AG04450 (cell line): ENCODE measurements at regions of chr3 and their contacts with region 1.

Region 1: DNA sequence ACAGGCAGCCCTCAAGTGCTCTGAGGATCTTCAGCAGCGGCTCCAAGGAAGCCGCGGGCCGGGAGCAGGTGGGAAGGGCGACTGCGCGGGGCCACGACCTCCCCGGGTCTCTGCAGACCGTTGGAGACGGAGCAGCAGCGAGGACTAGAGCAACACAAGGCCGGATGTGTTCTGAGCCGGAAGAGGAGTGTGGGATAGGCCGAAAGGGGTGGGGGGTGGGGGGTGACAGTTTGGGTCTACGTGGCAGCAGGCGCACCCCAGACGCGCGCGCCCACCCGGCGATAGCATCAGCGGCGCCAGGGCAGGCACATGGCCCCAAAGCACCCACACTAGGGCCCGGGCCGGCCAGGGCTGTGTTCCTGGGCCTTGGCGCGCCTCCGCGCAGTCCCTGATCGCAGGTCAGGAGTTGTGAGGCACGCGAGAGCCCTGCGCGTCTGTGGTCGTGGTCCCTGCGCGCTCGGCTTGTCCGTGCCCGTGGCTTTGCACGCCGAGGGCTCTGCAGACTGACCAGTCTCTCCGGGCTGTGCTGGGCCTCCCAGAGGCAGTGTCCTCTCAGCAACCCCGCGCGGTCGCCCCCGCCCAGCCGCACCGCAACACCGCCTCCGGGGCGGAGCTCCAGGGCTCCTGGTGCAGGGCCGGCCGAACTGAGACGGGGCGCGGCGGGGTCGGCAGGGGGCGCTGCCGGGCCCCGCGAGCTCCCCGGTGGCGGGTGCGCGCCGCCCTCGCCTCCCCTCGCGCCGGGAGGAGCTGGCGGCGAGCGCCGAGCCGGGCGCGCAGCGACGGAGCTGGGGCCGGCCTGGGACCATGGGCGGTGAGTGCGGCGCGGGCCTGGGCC is at the start of gene PXYLP1:
- DNase-seq: peak; percentile 51
- H3K4me3 ChIP-seq: peak within 1 kb of the TSS; percentile 78
- H3K27ac ChIP-seq: peak within 1 kb of the TSS; percentile 77
- H3K27me3 ChIP-seq: no peaks in the 10 kb centered on the region
- CTCF ChIP-seq: peak; percentile 39; the same call in 1 of the 2 replicates
- polyA plus RNA-seq, gene PXYLP1: 20.0 and 21.7 TPM in 2 replicates

Region 2: GRCh38 chr3:141250342-141250741 is 19.0 kb after region 1 on chr3:
- CTCF ChIA-PET with region 1: interaction called, 56 read pairs
- POLR2A ChIA-PET with region 1: interaction called, 3 read pairs
- DNase-seq: no peak
- H3K4me3 ChIP-seq: no peak overlapping the region
- H3K27ac ChIP-seq: no peak overlapping the region
- H3K27me3 ChIP-seq: no peaks in the 10 kb centered on the region
- CTCF ChIP-seq: no peak

Region 3: DNA sequence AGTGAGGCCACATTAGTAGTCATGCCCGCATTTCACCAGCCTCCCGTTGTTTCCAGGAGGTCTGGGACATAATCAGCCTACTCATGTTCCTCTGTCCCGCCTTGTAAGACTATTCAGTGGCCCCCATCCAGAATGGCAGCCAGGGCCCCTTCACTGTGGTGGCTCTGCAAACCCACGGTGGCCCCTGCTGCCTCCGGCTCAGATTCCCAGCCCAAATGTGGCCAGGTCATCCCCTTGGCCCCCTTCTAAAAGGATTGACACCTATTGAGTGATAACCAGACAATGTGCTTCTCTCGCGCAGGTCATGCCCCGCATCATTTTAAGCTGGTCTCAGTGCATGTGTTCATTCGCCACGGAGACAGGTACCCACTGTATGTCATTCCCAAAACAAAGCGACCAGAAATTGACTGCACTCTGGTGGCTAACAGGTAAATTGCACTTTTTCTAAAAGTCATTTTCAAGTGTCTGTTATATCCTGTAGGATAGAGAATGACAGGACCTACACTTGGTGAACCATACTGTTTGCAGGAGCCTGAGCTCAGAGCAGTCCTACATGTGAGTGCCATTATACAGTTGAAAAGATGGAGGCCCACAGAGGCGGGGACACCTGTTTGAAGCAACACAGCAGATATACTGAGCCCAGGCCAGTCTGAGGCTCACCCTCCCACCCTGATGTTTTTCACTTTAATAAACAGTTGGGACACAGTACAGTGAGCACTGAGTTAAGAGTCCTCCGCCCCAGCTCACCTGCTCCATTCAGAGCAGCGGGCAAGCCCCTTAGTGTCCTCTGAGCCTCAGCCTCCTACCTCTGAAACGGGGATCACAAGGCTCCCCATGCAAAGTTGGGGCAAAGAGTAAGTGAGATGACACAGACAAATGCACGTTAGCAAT is 48.0 kb after region 1 on chr3:
- CTCF ChIA-PET with region 1: interaction called, 18 read pairs
- POLR2A ChIA-PET with region 1: no interaction called
- DNase-seq: no peak
- H3K4me3 ChIP-seq: no peak overlapping the region
- H3K27ac ChIP-seq: no peak overlapping the region
- H3K27me3 ChIP-seq: no peaks in the 10 kb centered on the region
- CTCF ChIP-seq: peak; percentile 50

Region 4: GRCh38 chr3:141392897-141393734 is 161.8 kb after region 1 on chr3:
- CTCF ChIA-PET with region 1: no interaction called
- POLR2A ChIA-PET with region 1: no interaction called
- DNase-seq: no peak
- H3K4me3 ChIP-seq: no peak overlapping the region
- H3K27ac ChIP-seq: no peak overlapping the region
- H3K27me3 ChIP-seq: no peaks in the 10 kb centered on the region
- CTCF ChIP-seq: no peak

Region 5: GRCh38 chr3:141452036-141452435 is 220.7 kb after region 1 on chr3:
- CTCF ChIA-PET with region 1: interaction called, 42 read pairs
- POLR2A ChIA-PET with region 1: no interaction called
- DNase-seq: no peak
- H3K4me3 ChIP-seq: no peak overlapping the region
- H3K27ac ChIP-seq: no peak overlapping the region
- H3K27me3 ChIP-seq: no peaks in the 10 kb centered on the region
- CTCF ChIP-seq: peak; percentile 82

Region 6: GRCh38 chr3:141561426-141562034 is 330.2 kb after region 1 on chr3:
- CTCF ChIA-PET with region 1: interaction called, 16 read pairs
- POLR2A ChIA-PET with region 1: no interaction called
- DNase-seq: peak; percentile 53
- H3K4me3 ChIP-seq: no peak overlapping the region
- H3K27ac ChIP-seq: no peak overlapping the region
- H3K27me3 ChIP-seq: no peaks in the 10 kb centered on the region
- CTCF ChIP-seq: peak; percentile 100